HepG2 (cell line): ENCODE measurements at regions of chr17 and their contacts with region 1.

Region 1: GRCh38 chr17:39668199-39668966 is at the start of gene PNMT:
- DNase-seq: peak; percentile 56
- ATAC-seq: peak; percentile 39
- H3K4me3 ChIP-seq: peak within 1 kb of the TSS; percentile 24 to 66 (median 46); a peak in 5 of 6 replicates
- H3K27ac ChIP-seq: no peak within 1 kb of the TSS
- H3K4me1 ChIP-seq: peaks cover 77% of the 10 kb centered on the region
- H3K27me3 ChIP-seq: peaks cover 11 to 51% of the 10 kb centered on the region in 2 experiments
- CTCF ChIP-seq: peak; percentile 94
- EP300 ChIP-seq: no peak
- POLR2A ChIP-seq: no peak
- RAD21 ChIP-seq: peak; percentile 85
- total RNA-seq, gene PNMT: not detected in 2 replicates

Region 2: DNA sequence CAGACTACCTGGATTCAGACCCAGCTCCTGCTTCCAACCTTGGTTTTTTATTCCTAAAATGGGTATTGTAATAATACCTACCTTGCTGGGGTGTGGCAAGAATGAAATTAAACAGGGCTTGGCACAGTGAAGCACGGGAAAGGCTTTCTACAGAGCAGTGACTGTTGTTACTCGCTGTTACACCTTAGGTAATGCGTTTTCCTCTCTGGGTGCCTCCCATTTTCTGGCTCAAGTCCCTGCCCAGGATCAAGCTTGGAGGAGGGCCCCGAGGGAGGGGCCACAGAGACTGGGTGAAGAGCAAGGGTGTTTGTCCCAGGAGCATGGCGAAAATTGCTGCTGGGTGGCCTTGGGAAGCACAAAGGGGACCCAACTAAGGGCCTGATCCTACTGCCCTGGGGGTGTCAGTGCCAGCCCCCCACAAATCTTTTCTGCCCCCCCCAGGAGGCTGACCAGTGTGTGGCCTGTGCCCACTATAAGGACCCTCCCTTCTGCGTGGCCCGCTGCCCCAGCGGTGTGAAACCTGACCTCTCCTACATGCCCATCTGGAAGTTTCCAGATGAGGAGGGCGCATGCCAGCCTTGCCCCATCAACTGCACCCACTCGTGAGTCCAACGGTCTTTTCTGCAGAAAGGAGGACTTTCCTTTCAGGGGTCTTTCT is 48.6 kb after region 1 on chr17:
- CTCF ChIA-PET with region 1: interaction called, 11 read pairs
- POLR2A ChIA-PET with region 1: no interaction called
- in situ Hi-C with region 1: no loop called
- intact Hi-C with region 1: loop called (anchors 1 kb)
- DNase-seq: no peak
- ATAC-seq: no peak
- H3K4me3 ChIP-seq: no peak overlapping the region
- H3K27ac ChIP-seq: no peak overlapping the region
- H3K4me1 ChIP-seq: no peaks in the 10 kb centered on the region
- H3K27me3 ChIP-seq: no peaks in the 10 kb centered on the region
- CTCF ChIP-seq: no peak
- EP300 ChIP-seq: no peak
- POLR2A ChIP-seq: no peak
- RAD21 ChIP-seq: no peak

Region 3: DNA sequence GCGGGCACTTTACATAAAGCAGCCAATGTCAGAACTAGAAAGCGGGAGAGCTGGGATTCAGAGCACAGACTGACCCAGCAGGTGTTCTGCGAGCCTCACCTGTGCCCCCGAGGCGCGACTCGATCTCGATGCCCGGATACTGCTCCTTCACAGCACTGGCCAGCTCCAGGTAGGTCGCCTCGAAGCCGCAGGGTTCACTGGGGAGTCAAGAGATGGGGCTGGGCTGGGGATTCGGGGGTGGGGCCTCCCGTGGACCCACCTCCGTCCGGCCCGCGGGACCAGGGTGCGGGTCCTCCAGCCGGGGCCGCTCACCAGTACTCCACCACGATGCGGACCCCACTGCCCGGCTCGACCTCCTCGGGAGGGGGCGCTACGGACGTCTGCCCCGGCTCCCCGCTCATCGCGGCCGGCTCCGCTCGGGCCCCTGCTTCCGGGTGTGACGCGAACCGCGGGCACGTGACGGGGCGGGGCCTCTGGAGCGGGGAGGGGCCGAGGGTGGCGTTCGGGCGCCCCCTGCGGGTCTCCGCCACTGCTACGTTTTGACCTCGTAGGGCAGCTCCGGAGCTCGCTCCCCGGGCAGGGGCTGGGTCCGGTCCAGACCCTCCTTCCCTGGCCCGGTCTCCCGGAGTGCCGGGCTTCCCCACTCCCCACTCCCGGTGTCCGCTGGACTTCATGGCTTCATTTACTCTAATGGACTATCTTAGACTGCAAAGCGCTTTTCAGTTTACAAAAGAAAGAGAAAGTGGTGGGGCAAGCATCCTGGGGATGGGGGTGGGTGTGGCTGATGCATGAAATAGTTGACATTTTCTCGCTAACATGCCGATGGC is 61.9 kb after region 1 on chr17 and contains the start of gene MIEN1:
- CTCF ChIA-PET with region 1: interaction called, 10 read pairs
- POLR2A ChIA-PET with region 1: interaction called, 9 read pairs
- in situ Hi-C with region 1: no loop called
- intact Hi-C with region 1: no loop called
- DNase-seq: peak; percentile 78
- ATAC-seq: peak; percentile 89
- H3K4me3 ChIP-seq: peak within 1 kb of the TSS; percentile 68 to 81 (median 74)
- H3K27ac ChIP-seq: peak within 1 kb of the TSS; percentile 65
- H3K4me1 ChIP-seq: peaks cover 21% of the 10 kb centered on the region
- H3K27me3 ChIP-seq: no peaks in the 10 kb centered on the region
- CTCF ChIP-seq: peak; percentile 93
- EP300 ChIP-seq: 0 out of 4 replicates have a peak, but pooled peaks have one; percentile 3 to 49
- POLR2A ChIP-seq: peak; percentile 56 to 84
- RAD21 ChIP-seq: peak; percentile 97
- total RNA-seq, gene MIEN1: 40.6 and 48.6 TPM in 2 replicates